ENCODE measurements at regions of chr1 and their contacts with region 1.

Region 1: GRCh38 chr1:110338886-110339406 is at the start of gene RBM15:
- DNase-seq: peak; percentile 100
- H3K4me3 ChIP-seq: peak within 1 kb of the TSS; percentile 83 to 91 (median 84)
- H3K27ac ChIP-seq: peak within 1 kb of the TSS; percentile 88
- H3K4me1 ChIP-seq: peaks cover 37% of the 10 kb centered on the region
- H3K27me3 ChIP-seq: no peaks in the 10 kb centered on the region
- CTCF ChIP-seq: no peak
- POLR2A ChIP-seq: no peak
- total RNA-seq, gene RBM15: 26.9 and 29.5 TPM in 2 replicates

Region 2: DNA sequence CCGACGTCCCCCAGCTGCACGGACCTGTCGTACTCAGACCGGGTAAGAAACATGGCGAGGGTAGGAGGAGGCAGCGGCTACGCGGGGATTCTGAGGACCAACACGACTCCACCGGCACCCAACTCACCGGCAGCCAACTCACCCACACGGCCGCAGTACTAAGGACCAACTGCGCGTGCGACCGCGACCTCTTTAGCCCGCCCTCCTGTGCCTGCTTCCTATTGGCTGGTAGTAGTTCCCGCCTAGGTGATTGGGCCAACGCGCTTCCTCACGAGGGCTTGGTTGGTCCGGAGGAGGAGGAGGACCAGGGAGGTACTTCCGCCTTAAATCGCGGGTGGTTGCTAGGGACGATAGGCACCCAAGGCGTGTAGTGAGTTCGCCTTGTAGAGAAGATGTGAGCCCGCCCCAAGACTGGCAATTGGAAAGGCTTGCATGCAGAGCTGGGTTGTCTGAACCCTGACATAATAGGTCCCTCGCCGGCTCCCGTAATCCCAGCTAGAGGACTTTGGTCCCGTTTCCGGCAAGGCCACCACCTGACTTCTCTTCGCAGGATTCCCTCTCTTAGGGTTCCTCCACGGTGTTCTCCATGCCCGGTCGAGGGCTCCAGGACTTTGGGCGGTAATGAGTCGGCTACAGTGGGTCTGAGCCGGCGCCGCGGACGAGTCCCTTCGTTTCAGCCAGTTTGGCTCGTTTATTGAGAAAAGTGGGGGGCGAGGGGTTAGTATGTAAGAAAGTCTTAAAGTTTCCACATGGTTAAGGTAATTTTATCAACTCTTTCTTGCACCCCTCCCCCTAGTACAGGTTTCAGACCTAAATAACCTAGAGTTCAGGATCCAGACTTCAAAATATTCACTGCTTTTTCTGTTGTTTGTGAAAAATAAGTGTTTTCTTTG is 912.4 kb before region 1 on chr1 and contains the start of gene PSMA5:
- CTCF ChIA-PET with region 1: no interaction called
- POLR2A ChIA-PET with region 1: no interaction called
- dilution Hi-C with region 1: no loop called
- intact Hi-C with region 1: loop called (anchors 2 kb)
- DNase-seq: peak; percentile 99
- H3K4me3 ChIP-seq: peak within 1 kb of the TSS; percentile 63 to 89 (median 86)
- H3K27ac ChIP-seq: peak within 1 kb of the TSS; percentile 68
- H3K4me1 ChIP-seq: peaks cover 15% of the 10 kb centered on the region
- H3K27me3 ChIP-seq: no peaks in the 10 kb centered on the region
- CTCF ChIP-seq: no peak
- POLR2A ChIP-seq: peak; percentile 88
- total RNA-seq, gene PSMA5: 112 and 125 TPM in 2 replicates

Region 3: DNA sequence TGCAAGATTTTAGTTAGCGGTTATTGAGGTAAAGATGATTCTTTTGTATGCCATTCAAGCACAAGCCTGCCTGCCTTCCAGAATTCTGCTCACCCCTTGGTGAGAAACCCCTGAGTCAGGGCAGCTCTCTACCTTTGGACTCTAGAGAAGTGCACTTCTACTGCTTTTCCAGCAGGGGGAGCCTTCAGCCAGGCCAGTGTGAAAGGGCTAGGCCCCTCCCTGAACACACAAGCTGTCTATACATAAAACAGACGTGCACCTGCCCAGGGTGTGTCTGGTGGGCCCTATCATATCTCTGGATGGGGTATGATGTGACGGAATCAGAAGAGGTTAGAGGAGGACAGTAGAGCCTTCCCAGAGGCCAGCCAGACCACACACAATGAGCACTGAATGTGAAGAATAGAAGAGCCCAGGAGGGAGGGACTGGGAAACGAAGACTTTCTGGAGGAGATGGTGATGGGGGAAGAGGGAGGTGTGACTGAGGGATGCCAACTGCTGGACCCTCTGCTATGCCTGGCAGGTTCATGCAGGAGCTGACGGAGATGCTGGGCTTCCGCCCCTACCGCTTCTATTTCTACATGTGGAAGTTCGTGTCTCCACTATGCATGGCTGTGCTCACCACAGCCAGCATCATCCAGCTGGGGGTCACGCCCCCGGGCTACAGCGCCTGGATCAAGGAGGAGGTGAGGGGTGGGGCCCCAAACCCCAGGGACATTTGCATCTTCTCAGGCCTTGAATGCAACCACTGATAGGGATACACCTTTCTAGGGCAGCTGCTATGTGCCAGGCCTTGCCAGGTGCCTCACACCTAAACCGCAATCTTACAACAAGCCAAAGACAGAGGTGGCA is 141.8 kb before region 1 on chr1:
- CTCF ChIA-PET with region 1: interaction called, 15 read pairs
- POLR2A ChIA-PET with region 1: no interaction called
- dilution Hi-C with region 1: no loop called
- intact Hi-C with region 1: no loop called
- DNase-seq: peak; percentile 34
- H3K4me3 ChIP-seq: no peak overlapping the region
- H3K27ac ChIP-seq: no peak overlapping the region
- H3K4me1 ChIP-seq: no peaks in the 10 kb centered on the region
- H3K27me3 ChIP-seq: no peaks in the 10 kb centered on the region
- CTCF ChIP-seq: peak; percentile 75 to 92
- POLR2A ChIP-seq: no peak

Region 4: DNA sequence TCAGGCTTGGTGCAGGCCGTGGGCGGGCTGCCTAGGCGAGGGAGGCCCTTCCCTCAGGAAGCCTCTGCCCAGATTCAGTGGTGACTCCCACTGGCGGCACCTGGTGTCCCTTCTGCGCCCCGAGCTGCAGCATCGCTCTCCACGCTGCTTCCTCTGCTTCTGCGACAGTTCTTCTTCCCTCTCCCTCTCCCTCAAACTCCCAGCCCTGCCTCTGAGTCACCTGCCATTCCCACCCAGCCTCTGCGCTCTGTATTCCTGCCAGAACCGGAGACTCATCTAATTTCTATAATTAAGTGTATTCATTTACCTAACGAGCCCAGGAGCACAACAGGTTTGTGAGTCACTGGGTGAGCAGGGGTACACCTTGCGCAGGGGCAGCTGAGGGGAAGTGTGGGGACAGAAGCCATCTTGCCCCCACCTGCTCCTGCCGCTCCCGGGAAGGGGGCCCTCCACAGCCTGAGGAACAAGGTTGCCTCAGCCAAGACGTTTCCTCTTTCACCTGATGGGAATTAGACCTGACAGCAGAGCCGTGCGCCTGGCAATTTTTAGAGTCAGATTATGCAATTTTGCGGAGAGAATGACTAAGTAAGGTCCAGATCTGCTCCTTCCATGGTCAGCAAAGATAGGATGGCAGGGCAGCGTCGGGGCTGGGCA is 109.5 kb before region 1 on chr1:
- CTCF ChIA-PET with region 1: no interaction called
- POLR2A ChIA-PET with region 1: no interaction called
- dilution Hi-C with region 1: no loop called
- intact Hi-C with region 1: no loop called
- DNase-seq: no peak
- H3K4me3 ChIP-seq: no peak overlapping the region
- H3K27ac ChIP-seq: no peak overlapping the region
- H3K4me1 ChIP-seq: peaks cover under 1% of the 10 kb centered on the region
- H3K27me3 ChIP-seq: no peaks in the 10 kb centered on the region
- CTCF ChIP-seq: no peak
- POLR2A ChIP-seq: no peak

Region 5: GRCh38 chr1:110281363-110282290 is 57.3 kb before region 1 on chr1:
- CTCF ChIA-PET with region 1: no interaction called
- POLR2A ChIA-PET with region 1: no interaction called
- dilution Hi-C with region 1: no loop called
- intact Hi-C with region 1: no loop called
- DNase-seq: no peak
- H3K4me3 ChIP-seq: no peak overlapping the region
- H3K27ac ChIP-seq: no peak overlapping the region
- H3K4me1 ChIP-seq: no peaks in the 10 kb centered on the region
- H3K27me3 ChIP-seq: peaks cover 6 to 7% of the 10 kb centered on the region in 2 experiments
- CTCF ChIP-seq: no peak
- POLR2A ChIP-seq: no peak

Region 6: GRCh38 chr1:110312188-110313121 is 26.5 kb before region 1 on chr1:
- CTCF ChIA-PET with region 1: interaction called, 31 read pairs
- POLR2A ChIA-PET with region 1: no interaction called
- dilution Hi-C with region 1: no loop called
- intact Hi-C with region 1: no loop called
- DNase-seq: peak; percentile 70
- H3K4me3 ChIP-seq: no peak overlapping the region
- H3K27ac ChIP-seq: no peak overlapping the region
- H3K4me1 ChIP-seq: no peaks in the 10 kb centered on the region
- H3K27me3 ChIP-seq: no peaks in the 10 kb centered on the region
- CTCF ChIP-seq: peak; percentile 88 to 96
- POLR2A ChIP-seq: no peak

Region 7: DNA sequence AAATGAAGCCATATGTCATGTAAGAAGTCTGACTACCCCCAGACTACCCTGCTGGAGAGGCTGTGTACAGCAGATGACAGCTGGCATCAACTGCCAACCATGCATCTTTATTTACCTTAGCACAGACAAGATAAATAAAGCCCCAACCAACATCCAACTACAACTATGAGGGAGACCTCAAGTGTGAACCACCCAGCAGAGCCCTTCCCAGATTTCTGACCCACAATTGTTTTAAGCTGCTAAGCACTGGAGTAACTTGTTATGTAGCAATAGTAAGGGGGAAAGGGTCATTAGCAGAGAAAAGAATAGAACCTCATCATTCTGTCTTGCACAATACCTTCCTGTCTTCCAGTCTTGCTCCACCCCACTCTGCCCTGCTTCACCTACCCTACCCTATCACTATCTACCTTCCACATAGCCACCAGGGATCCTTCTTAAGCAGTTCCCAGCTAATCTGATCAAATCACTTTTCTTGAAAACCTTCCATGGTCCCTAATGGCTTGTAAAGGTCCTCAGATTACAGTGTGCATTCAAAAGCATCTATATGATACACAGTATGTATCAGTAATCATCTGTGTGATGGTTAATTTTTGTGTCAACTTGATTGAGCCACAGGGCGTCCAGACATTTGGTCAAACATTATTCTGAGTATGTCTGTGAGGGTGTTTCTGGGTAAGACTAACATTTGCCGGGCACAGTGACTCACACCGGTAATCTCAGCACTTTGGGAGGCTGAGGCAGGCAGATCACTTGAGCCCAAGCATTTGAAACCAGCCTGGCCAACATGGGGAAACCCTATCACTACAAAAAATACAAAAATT is 19.4 kb before region 1 on chr1:
- CTCF ChIA-PET with region 1: interaction called, 11 read pairs
- POLR2A ChIA-PET with region 1: no interaction called
- dilution Hi-C with region 1: no loop called
- intact Hi-C with region 1: no loop called
- DNase-seq: no peak
- H3K4me3 ChIP-seq: no peak overlapping the region
- H3K27ac ChIP-seq: no peak overlapping the region
- H3K4me1 ChIP-seq: no peaks in the 10 kb centered on the region
- H3K27me3 ChIP-seq: no peaks in the 10 kb centered on the region
- CTCF ChIP-seq: no peak
- POLR2A ChIP-seq: no peak

Region 8: DNA sequence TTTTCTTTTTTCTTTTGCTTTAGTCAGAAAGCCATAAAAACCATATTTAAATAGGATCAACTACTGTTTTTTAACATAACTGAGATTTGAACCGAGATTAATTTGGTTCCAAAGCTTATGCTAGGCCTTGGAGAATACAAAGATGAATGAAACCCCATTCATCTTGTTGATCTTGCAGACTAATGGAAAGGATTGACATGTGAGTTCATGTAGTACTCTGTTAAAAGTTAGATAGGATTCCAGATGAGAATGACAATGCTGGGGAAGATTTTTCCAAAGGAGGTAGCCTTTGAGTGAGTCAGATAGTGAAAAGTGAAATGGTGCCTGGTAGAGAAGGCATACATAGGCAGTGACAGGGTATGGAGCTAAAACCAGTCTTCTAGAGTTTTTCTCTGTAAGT is 22.9 kb after region 1 on chr1:
- CTCF ChIA-PET with region 1: interaction called, 5 read pairs
- POLR2A ChIA-PET with region 1: interaction called, 11 read pairs
- dilution Hi-C with region 1: no loop called
- intact Hi-C with region 1: no loop called
- DNase-seq: no peak
- H3K4me3 ChIP-seq: no peak overlapping the region
- H3K27ac ChIP-seq: no peak overlapping the region
- H3K4me1 ChIP-seq: no peaks in the 10 kb centered on the region
- H3K27me3 ChIP-seq: no peaks in the 10 kb centered on the region
- CTCF ChIP-seq: no peak
- POLR2A ChIP-seq: no peak

Region 9: GRCh38 chr1:110407260-110408210 is 68.6 kb after region 1 on chr1 and contains the start of gene LAMTOR5:
- CTCF ChIA-PET with region 1: interaction called, 7 read pairs
- POLR2A ChIA-PET with region 1: interaction called, 3 read pairs
- dilution Hi-C with region 1: no loop called
- intact Hi-C with region 1: loop called (anchors 1 kb)
- DNase-seq: peak; percentile 97
- H3K4me3 ChIP-seq: peak within 1 kb of the TSS; percentile 94 to 100 (median 95)
- H3K27ac ChIP-seq: peak within 1 kb of the TSS; percentile 69
- H3K4me1 ChIP-seq: peaks cover 9% of the 10 kb centered on the region
- H3K27me3 ChIP-seq: no peaks in the 10 kb centered on the region
- CTCF ChIP-seq: no peak
- POLR2A ChIP-seq: peak; percentile 92
- total RNA-seq, gene LAMTOR5: 137 and 150 TPM in 2 replicates